ENCODE measurements at regions of chr11 and their contacts with region 1.

Region 1: DNA sequence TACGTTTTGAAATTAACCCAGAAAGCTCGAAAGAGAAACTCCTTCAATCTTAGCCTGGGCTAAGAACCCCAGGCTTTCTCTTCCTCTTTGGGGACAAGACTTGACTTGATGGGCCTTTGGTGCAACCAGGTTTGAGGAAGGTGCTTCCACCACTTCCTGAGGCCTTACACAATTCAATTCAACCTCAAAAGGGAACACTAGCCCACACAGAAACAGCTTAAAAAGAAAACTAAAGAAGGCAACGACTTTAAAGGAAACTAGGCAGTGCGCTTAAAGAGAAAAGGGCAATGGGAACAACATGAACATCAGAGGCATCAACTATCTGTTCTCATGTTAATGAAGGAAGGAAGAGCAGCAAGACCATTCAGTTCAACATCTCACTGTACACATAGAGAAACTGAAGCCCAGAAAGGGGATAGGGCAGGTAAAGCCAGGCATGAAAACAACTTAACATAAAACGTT is 24.8 kb downstream of the PAK1 start:
- DNase-seq: no peak
- ATAC-seq: no peak
- H3K4me3 ChIP-seq: no peak overlapping the region
- H3K4me3 Mint-ChIP-seq: peak overlapping the region; percentile 29
- H3K27ac ChIP-seq: no peak overlapping the region
- H3K27ac Mint-ChIP-seq: peak overlapping the region; percentile 55
- H3K4me1 ChIP-seq: peaks cover 19% of the 10 kb centered on the region
- H3K4me1 Mint-ChIP-seq: peaks cover 22% of the 10 kb centered on the region
- H3K27me3 ChIP-seq: no peaks in the 10 kb centered on the region
- H3K27me3 Mint-ChIP-seq: no peaks in the 10 kb centered on the region
- CTCF ChIP-seq: no peak

Region 2: DNA sequence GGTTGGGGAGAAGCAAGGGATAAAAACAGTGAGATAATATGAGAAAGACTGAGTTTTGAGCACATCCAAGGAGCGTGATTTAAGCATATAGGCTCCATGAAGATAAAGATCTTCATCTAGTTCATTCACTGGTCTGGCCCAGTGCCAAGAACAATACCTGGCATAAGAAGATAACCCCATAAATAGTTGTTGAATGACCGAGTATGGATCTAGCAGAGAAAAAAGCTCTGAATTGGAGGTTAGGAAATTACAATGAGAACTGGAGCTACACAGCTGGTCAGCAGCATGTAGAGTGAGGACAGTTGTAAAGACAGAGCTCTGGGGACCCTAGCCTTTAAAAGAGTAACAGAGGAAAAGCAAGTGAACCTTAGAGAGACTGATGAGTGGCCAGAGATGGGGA is 57.8 kb after region 1 on chr11:
- CTCF ChIA-PET with region 1: no interaction called
- POLR2A ChIA-PET with region 1: no interaction called
- intact Hi-C with region 1: loop called in 1 of 2 experiments (anchors 5 kb)
- DNase-seq: peak in 3 of 9 experiments; percentile 6 to 9 (median 8)
- ATAC-seq: no peak
- H3K4me3 ChIP-seq: no peak overlapping the region
- H3K4me3 Mint-ChIP-seq: no peak overlapping the region
- H3K27ac ChIP-seq: no peak overlapping the region
- H3K27ac Mint-ChIP-seq: no peak overlapping the region
- H3K4me1 ChIP-seq: no peaks in the 10 kb centered on the region
- H3K4me1 Mint-ChIP-seq: no peaks in the 10 kb centered on the region
- H3K27me3 ChIP-seq: no peaks in the 10 kb centered on the region
- H3K27me3 Mint-ChIP-seq: peaks cover 2% of the 10 kb centered on the region
- CTCF ChIP-seq: no peak

Region 3: DNA sequence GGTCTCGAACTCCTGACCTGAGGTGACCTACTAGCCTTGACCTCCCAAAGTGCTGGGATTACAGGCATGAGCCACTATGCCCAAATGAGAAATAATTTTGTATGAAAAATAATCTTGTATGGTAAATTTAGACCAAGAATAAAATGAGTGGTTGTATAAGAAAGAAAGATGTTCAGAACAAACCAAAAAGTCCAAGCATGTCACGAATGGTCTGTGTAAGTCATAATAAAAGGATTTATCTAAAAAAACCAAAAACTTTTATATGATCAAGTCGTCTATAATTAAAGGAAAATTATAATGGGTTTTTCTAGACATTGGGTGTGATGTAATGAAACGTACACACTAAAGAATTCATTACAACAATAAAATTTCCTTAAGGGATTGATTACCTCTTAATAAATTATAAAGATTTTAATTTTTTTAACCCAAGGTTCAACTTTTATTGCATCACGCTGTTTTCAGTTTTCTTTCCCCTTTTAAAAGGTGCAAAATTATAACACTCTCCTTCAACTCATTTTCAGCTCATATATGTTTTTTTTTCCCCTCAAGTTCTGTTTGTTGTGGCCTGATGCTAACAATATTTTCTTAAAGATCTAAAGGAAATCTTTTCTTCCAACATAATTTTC is 131.7 kb after region 1 on chr11:
- CTCF ChIA-PET with region 1: no interaction called
- POLR2A ChIA-PET with region 1: interaction called, 10 read pairs
- intact Hi-C with region 1: no loop called
- DNase-seq: no peak
- ATAC-seq: no peak
- H3K4me3 ChIP-seq: no peak overlapping the region
- H3K4me3 Mint-ChIP-seq: no peak overlapping the region
- H3K27ac ChIP-seq: no peak overlapping the region
- H3K27ac Mint-ChIP-seq: no peak overlapping the region
- H3K4me1 ChIP-seq: no peaks in the 10 kb centered on the region
- H3K4me1 Mint-ChIP-seq: no peaks in the 10 kb centered on the region
- H3K27me3 ChIP-seq: no peaks in the 10 kb centered on the region
- H3K27me3 Mint-ChIP-seq: peaks cover 9% of the 10 kb centered on the region
- CTCF ChIP-seq: no peak

Region 4: DNA sequence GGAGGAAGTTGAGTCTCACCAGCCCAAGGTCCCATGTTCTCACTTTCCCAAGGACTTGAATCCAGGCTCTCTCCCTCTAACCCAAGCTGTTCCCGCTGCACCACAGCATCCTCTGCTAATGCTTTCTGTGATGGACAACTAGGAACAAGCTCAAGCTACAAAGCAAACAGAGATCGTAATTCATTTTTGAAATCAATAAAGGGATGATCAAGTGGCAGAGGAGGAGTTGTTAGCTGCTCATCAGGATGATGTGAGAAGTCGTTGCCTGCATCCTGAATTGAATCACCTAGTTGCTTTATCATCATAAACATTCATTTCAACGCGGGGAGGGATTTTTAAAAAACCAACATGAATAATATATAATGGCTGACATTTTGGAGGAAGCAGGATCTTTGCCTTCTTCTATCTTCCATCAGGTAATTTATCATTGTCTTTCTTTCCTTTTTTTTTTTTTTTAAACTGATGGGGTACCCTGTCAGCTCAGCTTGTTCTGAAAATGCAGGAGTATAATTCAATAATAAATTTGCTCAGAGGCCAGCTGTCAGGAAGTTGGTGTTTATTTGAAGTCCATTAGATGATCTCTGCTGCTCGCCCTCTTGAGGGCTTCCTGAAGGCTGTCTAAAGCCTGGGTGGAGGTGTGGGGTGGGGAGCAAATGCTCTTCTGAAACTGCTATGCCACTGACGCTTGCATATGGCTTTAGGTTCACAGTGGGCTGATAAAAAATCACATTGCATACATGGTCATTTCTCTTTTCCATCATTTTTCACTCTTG is 1300.0 kb after region 1 on chr11:
- CTCF ChIA-PET with region 1: no interaction called
- POLR2A ChIA-PET with region 1: no interaction called
- intact Hi-C with region 1: no loop called
- DNase-seq: no peak
- ATAC-seq: no peak
- H3K4me3 ChIP-seq: no peak overlapping the region
- H3K4me3 Mint-ChIP-seq: no peak overlapping the region
- H3K27ac ChIP-seq: no peak overlapping the region
- H3K27ac Mint-ChIP-seq: no peak overlapping the region
- H3K4me1 ChIP-seq: no peaks in the 10 kb centered on the region
- H3K4me1 Mint-ChIP-seq: no peaks in the 10 kb centered on the region
- H3K27me3 ChIP-seq: no peaks in the 10 kb centered on the region
- H3K27me3 Mint-ChIP-seq: no peaks in the 10 kb centered on the region
- CTCF ChIP-seq: no peak